GM10248 (cell line): ENCODE measurements at regions of chr1 and their contacts with region 1.

Region 1: GRCh38 chr1:89804642-89805237 is 16.1 kb upstream of the LRRC8D start:
- DNase-seq: peak; percentile 71
- CTCF ChIP-seq: peak; percentile 96

Region 2: DNA sequence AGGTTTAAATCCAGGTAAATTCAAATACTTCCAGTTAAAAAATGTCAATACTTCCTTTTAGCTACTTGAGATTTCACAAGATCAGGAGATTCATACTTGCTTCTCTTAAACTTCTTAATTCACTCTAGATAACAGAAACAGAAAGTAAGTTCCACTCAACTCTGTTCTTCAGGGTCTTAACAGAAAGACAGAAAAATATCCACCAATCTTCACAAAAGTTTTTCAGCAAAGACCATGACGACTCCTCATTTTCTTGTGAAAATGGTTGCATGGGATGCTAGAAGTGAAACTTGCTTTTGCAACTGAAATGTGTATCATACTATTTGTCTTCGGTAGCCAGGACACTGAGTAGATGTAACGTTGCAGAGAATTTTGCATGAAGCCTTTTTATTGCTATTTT is 184.1 kb before region 1 on chr1:
- CTCF ChIA-PET with region 1: no interaction called
- POLR2A ChIA-PET with region 1: no interaction called
- DNase-seq: no peak
- CTCF ChIP-seq: no peak

Region 3: GRCh38 chr1:89643577-89643976 is 161.2 kb before region 1 on chr1:
- CTCF ChIA-PET with region 1: no interaction called
- POLR2A ChIA-PET with region 1: no interaction called
- DNase-seq: no peak
- CTCF ChIP-seq: no peak

Region 4: DNA sequence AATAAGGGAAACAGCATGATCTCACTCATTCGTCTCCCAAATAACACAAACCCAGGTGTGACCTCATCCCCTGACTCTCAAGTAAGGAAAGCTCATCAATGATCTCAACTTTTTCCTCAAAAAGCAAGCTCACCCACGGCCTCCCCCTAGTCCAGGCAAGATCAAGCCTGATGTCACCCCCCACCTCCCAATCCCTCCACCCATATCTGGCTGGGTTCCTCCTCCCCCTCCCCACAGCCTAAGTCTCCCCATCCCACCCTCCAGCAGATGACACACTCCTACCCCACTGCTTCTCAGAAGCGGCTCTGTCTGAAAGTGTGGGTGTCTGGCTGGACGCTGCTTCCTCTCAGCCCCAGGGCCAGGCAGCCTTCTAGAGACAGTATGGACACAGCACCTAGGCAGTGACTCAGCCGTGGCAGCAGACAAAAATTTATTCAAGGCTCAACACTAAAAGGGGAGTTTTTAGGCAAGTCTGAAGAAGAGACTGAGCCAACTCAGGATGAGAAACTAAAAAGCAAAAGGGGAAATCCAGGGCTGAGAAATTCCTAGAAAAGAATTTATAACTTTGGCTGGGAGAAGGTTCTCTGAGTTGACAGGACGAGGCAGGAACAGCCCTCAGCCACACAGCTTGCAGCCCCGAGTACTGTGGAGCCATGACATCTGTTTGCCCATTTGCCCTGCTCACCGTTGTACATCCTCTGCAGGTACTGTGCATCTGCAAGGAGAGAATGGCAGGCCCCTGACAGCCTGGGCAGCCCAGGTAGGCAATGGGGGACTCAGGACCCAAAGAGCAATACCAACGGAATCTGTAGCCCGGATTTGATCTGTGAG is 65.5 kb before region 1 on chr1:
- CTCF ChIA-PET with region 1: no interaction called
- POLR2A ChIA-PET with region 1: no interaction called
- DNase-seq: peak; percentile 32
- CTCF ChIP-seq: no peak

Region 5: DNA sequence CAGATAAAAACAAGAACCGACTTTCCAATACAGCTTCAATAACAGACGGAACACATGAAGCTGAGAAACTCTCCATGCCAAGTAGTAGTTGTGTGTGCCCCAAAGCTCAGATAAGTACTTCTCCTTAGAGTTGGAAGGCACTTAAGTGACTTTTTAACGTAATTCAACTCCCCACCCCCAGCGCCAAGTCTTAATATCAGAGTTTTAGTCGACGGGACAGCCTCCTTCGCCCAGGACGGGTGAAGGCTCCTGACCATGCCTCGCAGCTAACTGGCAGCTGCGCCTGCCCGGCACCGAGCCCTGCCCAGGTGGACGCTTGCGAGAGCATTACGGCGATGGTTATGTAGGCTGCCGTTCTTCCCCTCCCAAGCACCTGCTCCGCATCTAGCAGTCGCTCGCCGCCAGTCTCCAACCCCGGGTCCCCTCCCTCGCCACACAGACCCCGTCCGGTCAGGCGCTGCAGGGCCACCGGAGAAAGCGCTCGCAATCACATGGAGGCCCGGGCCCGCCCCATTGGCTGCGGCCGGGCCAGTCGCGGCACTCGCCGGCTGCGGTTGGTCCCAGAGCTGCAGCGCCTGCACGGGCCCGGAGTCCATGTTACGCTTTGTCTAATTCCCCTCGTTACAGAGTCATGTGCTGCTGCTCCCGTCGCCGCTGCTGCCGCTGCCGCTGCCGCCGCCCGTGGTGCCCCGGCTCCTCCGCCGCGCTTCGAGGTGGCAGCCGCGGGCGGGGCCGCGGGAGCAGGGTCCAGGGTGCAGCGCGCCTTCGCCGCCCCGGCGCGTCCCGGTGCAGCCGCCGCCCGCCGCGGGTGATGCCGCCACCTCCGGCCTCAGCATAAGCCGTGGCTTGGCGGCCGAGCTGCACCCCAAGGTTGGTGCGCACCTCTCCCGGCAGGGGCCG is 15.9 kb after region 1 on chr1 and contains the start of gene LRRC8D:
- CTCF ChIA-PET with region 1: interaction called, 14 read pairs
- POLR2A ChIA-PET with region 1: no interaction called
- DNase-seq: peak; percentile 91
- CTCF ChIP-seq: no peak